ENCODE measurements at regions of chr17 and their contacts with region 1.

Region 1: DNA sequence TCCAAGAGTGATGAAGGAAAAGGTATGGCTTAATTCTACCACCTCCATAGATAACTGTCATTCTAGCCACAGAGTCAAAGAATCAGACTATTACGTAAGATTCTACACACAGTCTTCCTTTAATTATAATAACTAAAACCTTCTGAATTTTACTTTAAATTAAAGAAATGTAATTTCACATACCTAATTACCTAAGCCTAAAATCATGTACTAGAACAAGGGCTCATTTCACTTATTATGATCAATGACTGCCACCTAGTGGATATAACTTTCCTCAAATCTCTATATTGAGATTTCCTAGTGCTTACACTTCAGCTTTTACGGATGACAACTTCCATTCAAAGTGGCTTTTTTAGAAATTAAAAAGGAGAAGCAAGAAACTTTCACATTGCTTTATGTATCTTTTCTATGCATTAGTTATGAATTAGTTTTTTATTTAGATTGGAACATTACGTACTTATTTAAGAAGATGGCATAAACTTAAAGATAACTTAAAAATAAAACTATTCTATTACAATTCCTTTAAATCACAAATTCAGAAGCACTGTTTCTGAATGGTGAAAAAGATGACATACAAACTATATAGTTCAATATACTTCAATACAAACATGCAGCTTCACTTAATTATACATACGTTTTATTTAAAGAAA is 18.2 kb upstream of the ABCA10 start:
- DNase-seq: peak; percentile 25
- ATAC-seq: peak; percentile 85
- H3K4me3 ChIP-seq: no peak overlapping the region
- H3K27ac ChIP-seq: no peak overlapping the region
- H3K4me1 ChIP-seq: no peaks in the 10 kb centered on the region
- H3K27me3 ChIP-seq: no peaks in the 10 kb centered on the region
- CTCF ChIP-seq: peak; percentile 26 to 64 (median 44); a peak in 4 of 6 replicates
- EP300 ChIP-seq: no peak
- POLR2A ChIP-seq: no peak
- RAD21 ChIP-seq: peak; percentile 68

Region 2: DNA sequence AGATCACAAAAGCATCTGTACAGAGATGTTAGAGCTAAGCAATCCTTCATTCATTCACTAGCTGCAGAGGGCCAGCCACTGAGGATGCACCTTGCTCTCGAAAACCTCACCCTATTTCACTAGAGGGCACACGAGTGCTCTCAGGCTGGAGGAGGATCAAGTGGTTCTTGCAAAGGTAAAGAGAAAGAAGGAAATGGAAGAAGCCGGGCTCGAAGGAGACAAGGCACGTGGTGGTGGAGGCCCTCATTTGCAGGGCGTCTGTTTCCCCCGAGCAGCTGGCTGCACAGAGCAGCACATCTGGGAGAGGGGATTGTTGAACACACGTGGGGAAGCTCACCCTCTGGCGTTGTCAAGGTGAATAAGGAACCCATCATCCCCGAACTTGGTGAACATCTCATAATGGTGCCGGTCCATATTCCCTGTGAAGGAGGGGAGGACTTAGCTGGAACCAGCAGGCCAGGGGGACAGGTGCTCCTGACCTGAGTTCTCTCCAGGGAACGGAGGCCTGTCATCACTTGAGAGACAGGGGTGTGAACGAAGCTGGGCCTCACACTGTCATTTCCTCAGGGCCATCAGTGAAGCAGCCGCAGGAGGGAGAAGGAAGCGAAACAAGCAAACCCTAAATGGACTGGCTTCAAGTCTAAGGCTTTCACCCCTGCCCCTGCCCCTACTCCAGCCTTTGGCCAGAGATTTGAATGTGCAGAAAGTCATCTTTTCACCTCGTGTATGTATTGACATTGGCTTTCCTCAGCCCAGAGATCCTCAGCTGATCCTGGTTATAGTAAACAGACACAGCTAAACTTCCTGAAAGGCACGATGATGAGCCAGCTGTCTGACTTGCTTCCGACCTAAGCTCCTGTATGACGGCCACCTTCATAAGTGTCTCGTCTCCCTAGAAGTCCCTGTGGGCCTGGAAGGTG is 707.0 kb before region 1 on chr17:
- CTCF ChIA-PET with region 1: no interaction called
- POLR2A ChIA-PET with region 1: no interaction called
- RAD21 ChIA-PET with region 1: no interaction called
- SMC1A ChIA-PET with region 1: no interaction called
- in situ Hi-C with region 1: loop called (anchors 10 kb)
- intact Hi-C with region 1: no loop called
- DNase-seq: no peak
- ATAC-seq: peak; percentile 53
- H3K4me3 ChIP-seq: no peak overlapping the region
- H3K27ac ChIP-seq: no peak overlapping the region
- H3K4me1 ChIP-seq: no peaks in the 10 kb centered on the region
- H3K27me3 ChIP-seq: no peaks in the 10 kb centered on the region
- CTCF ChIP-seq: peak in 2 of 3 experiments; percentile 6 to 29; a peak in 3 of 6 replicates
- EP300 ChIP-seq: no peak
- POLR2A ChIP-seq: peak; percentile 6; the same call in 1 of the 2 replicates
- RAD21 ChIP-seq: peak; percentile 33; the same call in 1 of the 2 replicates

Region 3: GRCh38 chr17:68794636-68795434 is 452.0 kb before region 1 on chr17:
- CTCF ChIA-PET with region 1: interaction called, 13 read pairs
- POLR2A ChIA-PET with region 1: interaction called, 6 read pairs
- RAD21 ChIA-PET with region 1: interaction called, 5 read pairs
- SMC1A ChIA-PET with region 1: interaction called, 15 read pairs
- in situ Hi-C with region 1: no loop called
- intact Hi-C with region 1: no loop called
- DNase-seq: no peak
- ATAC-seq: peak; percentile 72
- H3K4me3 ChIP-seq: peak overlapping the region; percentile 7; the same call in 1 of the 2 replicates
- H3K27ac ChIP-seq: peak overlapping the region; percentile 38
- H3K4me1 ChIP-seq: peaks cover 4% of the 10 kb centered on the region; the same call in 1 of the 2 replicates
- H3K27me3 ChIP-seq: no peaks in the 10 kb centered on the region
- CTCF ChIP-seq: peak; percentile 10 to 41 (median 33); a peak in 3 of 6 replicates
- EP300 ChIP-seq: no peak
- POLR2A ChIP-seq: no peak
- RAD21 ChIP-seq: peak; percentile 48

Region 4: DNA sequence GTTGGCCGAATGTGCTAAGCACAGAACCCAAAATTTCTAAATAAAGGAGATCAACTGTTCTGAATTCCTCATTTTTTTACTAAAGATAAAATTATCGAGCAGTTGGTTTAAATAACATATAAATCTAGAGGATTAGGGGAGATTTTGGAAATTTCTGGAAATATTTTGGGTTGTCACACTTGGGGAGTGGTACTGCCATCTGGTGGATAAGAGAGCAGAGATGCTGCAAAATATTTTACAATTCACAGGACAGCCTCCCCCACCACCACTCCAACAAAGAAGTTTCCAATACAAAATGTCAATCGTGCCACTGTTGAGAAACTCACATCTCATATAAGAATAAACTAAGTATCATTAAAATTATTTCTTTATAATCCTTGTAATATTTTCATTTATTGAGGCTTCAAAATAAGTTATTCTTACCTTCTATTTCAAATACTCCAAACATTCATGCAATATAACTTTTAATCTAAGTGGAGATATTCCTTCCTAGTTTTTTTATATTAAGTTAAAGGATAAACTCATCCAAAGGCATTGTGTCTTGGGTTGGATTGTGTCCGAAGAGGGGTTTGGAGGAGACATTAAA is 274.6 kb before region 1 on chr17:
- CTCF ChIA-PET with region 1: no interaction called
- POLR2A ChIA-PET with region 1: no interaction called
- RAD21 ChIA-PET with region 1: no interaction called
- SMC1A ChIA-PET with region 1: no interaction called
- in situ Hi-C with region 1: no loop called
- intact Hi-C with region 1: loop called (anchors 5 kb)
- DNase-seq: no peak
- ATAC-seq: peak; percentile 42; the same call in 1 of the 3 replicates
- H3K4me3 ChIP-seq: no peak overlapping the region
- H3K27ac ChIP-seq: no peak overlapping the region
- H3K4me1 ChIP-seq: no peaks in the 10 kb centered on the region
- H3K27me3 ChIP-seq: no peaks in the 10 kb centered on the region
- CTCF ChIP-seq: peak; percentile 42 to 44 (median 43); a peak in 5 of 6 replicates
- EP300 ChIP-seq: no peak
- POLR2A ChIP-seq: no peak
- RAD21 ChIP-seq: peak; percentile 55

Region 5: DNA sequence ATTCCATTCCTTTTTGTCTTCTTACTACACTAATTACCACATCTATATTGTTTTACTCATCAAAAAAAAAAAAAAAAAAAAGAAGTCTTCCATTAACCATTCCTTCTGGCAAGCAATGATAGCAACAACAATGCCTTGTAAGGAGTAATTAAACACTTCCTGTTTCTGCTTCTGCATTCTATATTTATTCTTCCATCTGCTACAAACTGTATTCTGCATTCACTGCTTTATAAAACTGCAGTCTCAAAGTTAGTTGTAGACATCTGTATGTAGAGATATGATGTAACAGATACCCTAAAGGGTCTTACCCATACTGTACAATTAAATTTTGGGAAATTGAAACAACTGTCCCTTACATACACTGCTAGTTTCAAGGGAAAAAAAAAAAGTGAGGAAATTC is 76.5 kb before region 1 on chr17:
- CTCF ChIA-PET with region 1: no interaction called
- POLR2A ChIA-PET with region 1: no interaction called
- RAD21 ChIA-PET with region 1: no interaction called
- SMC1A ChIA-PET with region 1: no interaction called
- in situ Hi-C with region 1: no loop called
- intact Hi-C with region 1: no loop called
- DNase-seq: no peak
- ATAC-seq: no peak
- H3K4me3 ChIP-seq: no peak overlapping the region
- H3K27ac ChIP-seq: no peak overlapping the region
- H3K4me1 ChIP-seq: no peaks in the 10 kb centered on the region
- H3K27me3 ChIP-seq: no peaks in the 10 kb centered on the region
- CTCF ChIP-seq: no peak
- EP300 ChIP-seq: no peak
- POLR2A ChIP-seq: no peak
- RAD21 ChIP-seq: no peak